BJ (cell line): ENCODE measurements at regions of chr20 and their contacts with region 1.

Region 1: GRCh38 chr20:59866338-59866737 is 67.1 kb downstream of the SYCP2 start:
- DNase-seq: no peak
- H3K4me3 ChIP-seq: no peak overlapping the region
- H3K27me3 ChIP-seq: no peaks in the 10 kb centered on the region
- CTCF ChIP-seq: no peak

Region 2: GRCh38 chr20:59903621-59904020 is 37.3 kb after region 1 on chr20:
- CTCF ChIA-PET with region 1: no interaction called
- POLR2A ChIA-PET with region 1: interaction called, 12 read pairs
- DNase-seq: no peak
- H3K4me3 ChIP-seq: no peak overlapping the region
- H3K27me3 ChIP-seq: no peaks in the 10 kb centered on the region
- CTCF ChIP-seq: no peak